ENCODE measurements at regions of chr3 and their contacts with region 1.

Region 1: GRCh38 chr3:132722164-132723024 is at the start of gene NPHP3:
- DNase-seq: peak; percentile 90 to 99 (median 96)

Region 2: GRCh38 chr3:132645058-132645457 is 77.3 kb before region 1 on chr3:
- intact Hi-C with region 1: no loop called
- DNase-seq: no peak

Region 3: DNA sequence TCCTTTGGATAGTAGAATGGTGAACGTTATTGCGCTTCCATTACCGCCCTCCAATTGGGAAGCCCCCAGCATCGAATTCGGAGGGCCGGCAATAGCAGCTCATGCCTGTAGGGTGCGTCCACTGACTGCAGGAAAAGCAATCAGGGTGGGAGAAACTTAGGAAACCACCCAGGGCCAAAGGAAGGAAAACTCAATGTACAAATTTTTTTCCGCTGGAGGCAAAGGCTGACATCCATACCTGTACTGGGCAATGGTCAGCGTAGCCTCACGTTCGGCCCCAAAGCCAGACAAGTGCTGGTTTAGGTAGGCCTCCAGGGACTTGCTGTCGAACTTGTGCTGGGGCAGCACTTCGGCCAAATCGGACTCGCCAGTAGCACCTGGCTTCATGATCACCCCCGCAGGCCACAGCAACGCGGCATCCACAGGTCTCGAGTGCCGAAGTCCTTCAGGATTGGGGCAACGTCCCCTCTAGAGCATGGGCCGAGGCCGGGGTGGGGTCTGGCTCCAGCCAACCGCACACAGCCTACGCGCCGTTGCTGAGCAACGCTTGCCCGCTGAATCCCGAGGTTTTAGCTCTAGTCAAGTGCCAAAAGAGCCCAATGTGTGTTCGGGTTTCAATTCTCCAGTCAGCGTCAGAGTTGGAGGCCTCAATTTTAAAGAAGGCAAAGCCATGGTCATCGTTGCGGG is 62.9 kb before region 1 on chr3 and contains the start of gene ACAD11:
- intact Hi-C with region 1: loop called (anchors 2 kb)
- DNase-seq: peak; percentile 51 to 95 (median 66)

Region 4: GRCh38 chr3:133805527-133806475 is 1083.4 kb after region 1 on chr3 and contains the start of gene SRPRB:
- intact Hi-C with region 1: loop called (anchors 10 kb)
- DNase-seq: peak; percentile 93 to 99 (median 97)